Caco-2 (cell line): ENCODE measurements at regions of chr11 and their contacts with region 1.

Region 1: DNA sequence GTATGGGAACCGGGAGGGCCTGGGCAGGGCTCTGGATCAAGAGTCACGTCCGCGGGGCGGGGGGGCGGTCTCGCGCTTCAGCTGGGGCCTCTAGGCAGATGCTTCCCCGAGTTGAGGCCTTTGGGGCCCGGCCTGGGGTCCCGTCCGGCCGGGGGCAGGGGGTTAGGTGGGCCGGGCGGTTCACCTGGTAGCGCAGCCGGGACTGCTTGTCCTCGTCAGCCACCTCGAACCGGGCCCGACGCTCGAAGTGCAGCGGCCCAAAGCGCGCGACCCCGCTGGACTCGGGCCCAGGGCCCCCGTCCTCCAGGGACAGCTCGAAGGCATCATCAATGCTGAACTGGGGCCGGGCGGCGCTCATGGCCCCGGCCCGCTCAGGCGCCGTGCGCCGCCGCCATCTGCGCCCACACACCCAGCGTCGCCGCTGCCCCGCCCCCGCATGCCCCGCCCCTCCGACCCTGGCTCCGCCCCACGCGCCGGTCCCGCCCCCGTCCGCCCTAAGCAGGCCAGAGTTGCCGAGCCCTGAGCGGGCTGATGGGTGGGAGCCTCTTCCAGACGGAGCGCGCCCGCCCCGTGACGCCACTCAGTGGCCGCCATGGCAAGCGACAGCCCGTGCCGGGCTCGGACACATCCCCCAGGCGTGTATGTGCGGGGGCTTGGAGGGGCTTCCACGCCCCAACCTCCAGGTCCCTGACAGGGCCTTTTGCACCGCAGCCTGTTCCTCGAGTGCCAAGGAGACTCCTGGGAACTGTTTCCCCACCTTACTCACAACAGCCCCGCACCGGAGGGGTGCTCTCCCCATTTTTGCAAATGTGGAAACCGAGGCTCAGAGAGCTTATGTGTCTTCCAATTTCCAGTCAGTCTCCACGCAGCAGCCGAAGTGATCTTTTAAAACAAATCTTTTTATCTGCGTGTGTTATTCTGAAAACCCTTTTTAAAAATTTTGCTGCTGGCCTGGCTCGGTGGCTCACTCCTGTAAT is at the start of gene TMEM134:
- DNase-seq: peak; percentile 96 to 98
- H3K4me3 ChIP-seq: peak within 1 kb of the TSS; percentile 69
- H3K4me3 Mint-ChIP-seq: peak within 1 kb of the TSS; percentile 94
- H3K27ac Mint-ChIP-seq: peak within 1 kb of the TSS; percentile 89
- H3K4me1 ChIP-seq: peaks cover 23% of the 10 kb centered on the region
- H3K4me1 Mint-ChIP-seq: peaks cover 20% of the 10 kb centered on the region
- H3K27me3 ChIP-seq: no peaks in the 10 kb centered on the region
- H3K27me3 Mint-ChIP-seq: no peaks in the 10 kb centered on the region
- CTCF ChIP-seq: peak; percentile 54 to 85
- total RNA-seq, gene TMEM134: 47.9 and 52.2 TPM in 2 replicates

Region 2: DNA sequence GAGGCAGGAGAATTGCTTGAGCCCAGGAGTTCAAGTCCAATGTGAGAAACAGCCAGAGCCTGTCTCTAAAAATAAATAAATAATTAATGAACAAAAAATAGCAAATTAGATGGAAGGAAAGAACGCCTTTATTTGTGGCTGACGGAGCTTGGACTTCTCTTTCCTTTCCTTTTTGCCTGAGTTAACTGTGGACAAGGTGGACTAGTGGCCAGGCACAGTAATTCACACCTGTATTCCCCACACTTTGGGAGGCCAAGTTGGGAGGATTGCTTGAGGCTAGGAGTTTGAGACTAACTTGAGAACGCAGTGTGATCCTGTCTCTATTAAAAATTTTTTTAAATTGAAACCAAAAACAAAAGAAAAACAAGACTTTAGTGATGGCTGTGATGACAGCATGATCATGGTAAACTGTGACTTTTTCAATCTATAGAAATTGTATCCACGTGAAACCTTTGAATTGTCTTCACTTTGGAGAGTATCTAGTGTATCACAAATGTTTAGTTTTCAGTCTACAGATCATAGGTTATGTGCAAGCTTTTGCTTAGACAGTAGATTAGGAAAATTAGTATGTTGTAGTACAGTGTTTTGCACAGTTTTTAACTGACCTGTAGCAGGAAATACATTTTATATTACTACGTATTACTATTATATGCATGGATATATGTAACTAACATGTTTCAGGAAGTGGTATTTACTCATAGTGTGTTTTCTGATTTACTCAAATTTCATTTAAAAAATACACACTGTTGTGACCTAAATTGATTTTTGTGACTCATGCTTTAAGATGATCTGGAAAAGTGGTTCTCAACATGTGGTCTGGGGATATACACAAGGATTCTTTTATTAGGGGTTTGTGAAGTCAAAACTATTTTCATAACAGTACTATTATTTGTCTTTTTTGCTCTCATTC is 308.0 kb before region 1 on chr11:
- CTCF ChIA-PET with region 1: interaction called, 17 read pairs
- POLR2A ChIA-PET with region 1: no interaction called
- intact Hi-C with region 1: no loop called
- DNase-seq: peak in 1 of 2 experiments; percentile 23
- H3K4me3 ChIP-seq: no peak overlapping the region
- H3K4me3 Mint-ChIP-seq: no peak overlapping the region
- H3K27ac Mint-ChIP-seq: no peak overlapping the region
- H3K4me1 ChIP-seq: no peaks in the 10 kb centered on the region
- H3K4me1 Mint-ChIP-seq: no peaks in the 10 kb centered on the region
- H3K27me3 ChIP-seq: no peaks in the 10 kb centered on the region
- H3K27me3 Mint-ChIP-seq: no peaks in the 10 kb centered on the region
- CTCF ChIP-seq: peak in 1 of 2 experiments; percentile 20

Region 3: GRCh38 chr11:67391304-67392132 is 77.6 kb before region 1 on chr11 and contains the start of gene RAD9A:
- CTCF ChIA-PET with region 1: interaction called, 3 read pairs
- POLR2A ChIA-PET with region 1: no interaction called
- intact Hi-C with region 1: loop called (anchors 1 kb)
- DNase-seq: peak; percentile 98 to 99
- H3K4me3 ChIP-seq: peak within 1 kb of the TSS; percentile 80
- H3K4me3 Mint-ChIP-seq: peak within 1 kb of the TSS; percentile 76
- H3K27ac Mint-ChIP-seq: peak within 1 kb of the TSS; percentile 63
- H3K4me1 ChIP-seq: peaks cover 5% of the 10 kb centered on the region; the same call in 1 of the 2 replicates
- H3K4me1 Mint-ChIP-seq: peaks cover 23% of the 10 kb centered on the region
- H3K27me3 ChIP-seq: no peaks in the 10 kb centered on the region
- H3K27me3 Mint-ChIP-seq: no peaks in the 10 kb centered on the region
- CTCF ChIP-seq: no peak
- total RNA-seq, gene RAD9A: 55.1 and 63.5 TPM in 2 replicates

Region 4: GRCh38 chr11:67420646-67421420 is 48.3 kb before region 1 on chr11:
- CTCF ChIA-PET with region 1: interaction called, 4 read pairs
- POLR2A ChIA-PET with region 1: no interaction called
- intact Hi-C with region 1: loop called (anchors 1 kb)
- DNase-seq: peak; percentile 99 to 100
- H3K4me3 ChIP-seq: peak overlapping the region; percentile 59
- H3K4me3 Mint-ChIP-seq: peak overlapping the region; percentile 71
- H3K27ac Mint-ChIP-seq: peak overlapping the region; percentile 68
- H3K4me1 ChIP-seq: peaks cover 13% of the 10 kb centered on the region
- H3K4me1 Mint-ChIP-seq: peaks cover 32% of the 10 kb centered on the region
- H3K27me3 ChIP-seq: no peaks in the 10 kb centered on the region
- H3K27me3 Mint-ChIP-seq: no peaks in the 10 kb centered on the region
- CTCF ChIP-seq: no peak

Region 5: GRCh38 chr11:67428052-67428914 is 40.8 kb before region 1 on chr11 and contains the start of gene RPS6KB2:
- CTCF ChIA-PET with region 1: no interaction called
- POLR2A ChIA-PET with region 1: interaction called, 3 read pairs
- intact Hi-C with region 1: loop called (anchors 1 kb)
- DNase-seq: peak; percentile 100
- H3K4me3 ChIP-seq: peak within 1 kb of the TSS; percentile 74
- H3K4me3 Mint-ChIP-seq: peak within 1 kb of the TSS; percentile 93
- H3K27ac Mint-ChIP-seq: peak within 1 kb of the TSS; percentile 96
- H3K4me1 ChIP-seq: peaks cover 4% of the 10 kb centered on the region; the same call in 1 of the 2 replicates
- H3K4me1 Mint-ChIP-seq: no peaks in the 10 kb centered on the region
- H3K27me3 ChIP-seq: no peaks in the 10 kb centered on the region
- H3K27me3 Mint-ChIP-seq: no peaks in the 10 kb centered on the region
- CTCF ChIP-seq: no peak
- total RNA-seq, gene RPS6KB2: 109 and 116 TPM in 2 replicates

Region 6: GRCh38 chr11:67439321-67439883 is 29.7 kb before region 1 on chr11:
- CTCF ChIA-PET with region 1: interaction called, 3 read pairs
- POLR2A ChIA-PET with region 1: interaction called, 9 read pairs
- intact Hi-C with region 1: loop called (anchors 1 kb)
- DNase-seq: peak in 1 of 2 experiments; percentile 68
- H3K4me3 ChIP-seq: no peak overlapping the region
- H3K4me3 Mint-ChIP-seq: peak overlapping the region; percentile 2
- H3K27ac Mint-ChIP-seq: peak overlapping the region; percentile 9
- H3K4me1 ChIP-seq: peaks cover 14% of the 10 kb centered on the region
- H3K4me1 Mint-ChIP-seq: no peaks in the 10 kb centered on the region
- H3K27me3 ChIP-seq: no peaks in the 10 kb centered on the region
- H3K27me3 Mint-ChIP-seq: no peaks in the 10 kb centered on the region
- CTCF ChIP-seq: peak in 1 of 2 experiments; percentile 38

Region 7: DNA sequence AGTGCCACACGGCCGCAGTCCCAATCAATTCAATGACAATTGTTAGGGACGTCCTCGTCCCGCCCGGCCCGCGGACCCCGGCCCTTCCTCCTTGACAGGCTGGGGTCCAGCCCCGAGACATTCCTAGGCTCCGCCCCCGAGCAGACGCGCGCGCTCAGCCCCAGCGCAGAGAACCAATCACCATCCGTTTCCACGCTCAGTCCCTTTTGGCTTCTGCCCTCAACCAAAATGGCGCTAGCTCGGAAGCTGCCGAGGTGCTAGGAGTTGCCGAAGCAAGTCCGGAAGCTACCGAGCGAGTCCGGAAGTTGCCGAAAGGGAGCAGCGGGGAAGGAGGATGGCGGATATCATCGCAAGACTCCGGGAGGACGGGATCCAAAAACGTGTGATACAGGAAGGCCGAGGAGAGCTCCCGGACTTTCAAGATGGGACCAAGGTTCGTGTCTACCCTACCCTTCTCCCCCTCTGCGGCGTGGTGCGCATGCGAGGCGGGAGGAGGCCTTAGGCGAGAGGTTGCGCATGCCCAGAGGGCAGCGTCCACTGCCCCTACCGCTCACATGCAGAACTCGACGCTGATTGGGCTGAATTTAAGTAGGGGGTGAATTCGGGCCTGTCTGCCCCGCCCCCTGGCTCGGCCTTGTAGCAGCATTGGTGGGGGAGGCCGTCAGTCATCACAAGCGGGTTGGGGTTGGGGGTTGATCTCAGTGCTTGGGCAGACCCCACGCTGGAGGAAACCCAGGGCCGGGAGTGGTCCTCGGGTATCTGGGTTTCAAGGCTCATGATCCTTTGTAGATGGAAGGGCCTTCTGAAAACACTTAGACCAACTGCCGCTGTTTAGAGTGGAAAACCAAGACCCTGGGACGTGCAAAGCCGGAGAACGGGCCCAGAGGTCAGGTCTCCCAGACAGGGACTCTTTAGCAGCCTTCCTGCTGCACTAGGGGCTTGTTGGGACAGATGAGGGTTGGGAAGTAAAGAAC is 14.0 kb after region 1 on chr11 and contains the start of gene AIP:
- CTCF ChIA-PET with region 1: interaction called, 3 read pairs
- POLR2A ChIA-PET with region 1: interaction called, 3 read pairs
- intact Hi-C with region 1: loop called (anchors 1 kb)
- DNase-seq: peak; percentile 100
- H3K4me3 ChIP-seq: peak within 1 kb of the TSS; percentile 48
- H3K4me3 Mint-ChIP-seq: peak within 1 kb of the TSS; percentile 99
- H3K27ac Mint-ChIP-seq: peak within 1 kb of the TSS; percentile 99
- H3K4me1 ChIP-seq: peaks cover 4% of the 10 kb centered on the region; the same call in 1 of the 2 replicates
- H3K4me1 Mint-ChIP-seq: peaks cover 24% of the 10 kb centered on the region
- H3K27me3 ChIP-seq: no peaks in the 10 kb centered on the region
- H3K27me3 Mint-ChIP-seq: no peaks in the 10 kb centered on the region
- CTCF ChIP-seq: peak; percentile 25 to 65
- total RNA-seq, gene AIP: 110 and 112 TPM in 2 replicates

Region 8: GRCh38 chr11:67500831-67501715 is 31.9 kb after region 1 on chr11:
- CTCF ChIA-PET with region 1: no interaction called
- POLR2A ChIA-PET with region 1: no interaction called
- intact Hi-C with region 1: no loop called
- DNase-seq: peak in 1 of 2 experiments; percentile 33
- H3K4me3 ChIP-seq: no peak overlapping the region
- H3K4me3 Mint-ChIP-seq: no peak overlapping the region
- H3K27ac Mint-ChIP-seq: no peak overlapping the region
- H3K4me1 ChIP-seq: peaks cover 11% of the 10 kb centered on the region
- H3K4me1 Mint-ChIP-seq: peaks cover 15% of the 10 kb centered on the region
- H3K27me3 ChIP-seq: no peaks in the 10 kb centered on the region
- H3K27me3 Mint-ChIP-seq: no peaks in the 10 kb centered on the region
- CTCF ChIP-seq: no peak